Heart right ventricle (tissue), 16 donors: ENCODE measurements at regions of chr20 and their contacts with region 1.

Region 1: GRCh38 chr20:58330687-58331086 is 21.2 kb downstream of the RAB22A start:
- DNase-seq: peak in 1 of 2 donors; percentile 22
- ATAC-seq: peak in 2 of 8 donors; percentile 38 to 47
- H3K4me3 ChIP-seq: no peak overlapping the region
- H3K27ac ChIP-seq: no peak overlapping the region
- H3K4me1 ChIP-seq: peaks cover 0 to 41% (median 22%) of the 10 kb centered on the region in 9 donors
- H3K27me3 ChIP-seq: no peaks in the 10 kb centered on the region
- CTCF ChIP-seq: no peak

Region 2: DNA sequence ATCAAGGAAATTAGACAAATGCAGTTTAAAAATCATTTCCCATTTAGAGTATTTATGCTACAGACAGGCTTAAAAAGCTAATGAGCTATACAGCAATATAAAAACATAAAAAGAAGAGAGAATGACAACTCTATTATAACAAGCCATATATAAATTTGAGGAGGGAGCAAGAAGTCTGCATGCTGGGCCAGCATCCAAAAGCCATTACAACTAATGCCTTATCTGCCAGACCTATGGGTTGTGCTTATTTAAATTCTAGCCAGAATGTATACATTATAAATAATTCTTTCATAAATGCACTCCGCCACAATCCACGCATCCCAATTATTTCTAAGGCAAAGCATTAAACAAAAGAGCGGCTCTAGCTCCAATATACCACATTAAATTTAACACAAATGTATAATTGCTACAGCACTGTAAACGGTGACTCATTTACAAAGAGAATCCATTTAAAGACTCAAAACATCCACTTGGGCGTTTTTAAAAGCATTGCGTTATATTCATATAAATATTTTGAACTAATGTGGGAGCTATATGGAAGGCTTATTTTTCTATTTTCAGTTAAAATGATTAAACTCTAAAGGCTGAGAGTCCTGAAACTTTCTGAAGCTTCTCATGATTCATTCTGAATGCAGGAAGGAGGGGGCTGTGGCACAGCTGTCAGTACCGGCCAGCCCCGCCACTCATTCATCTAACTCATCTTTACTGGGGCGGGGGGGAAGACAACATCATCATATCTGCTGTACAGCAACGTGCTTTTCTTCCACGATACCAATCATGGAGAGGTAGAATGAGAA is 58.9 kb before region 1 on chr20:
- intact Hi-C with region 1: loop called in 1 of 10 experiments (anchors 10 kb)
- DNase-seq: no peak
- ATAC-seq: no peak
- H3K4me3 ChIP-seq: no peak overlapping the region
- H3K27ac ChIP-seq: no peak overlapping the region
- H3K4me1 ChIP-seq: peaks cover 0 to 5% (median 0%) of the 10 kb centered on the region in 9 donors
- H3K27me3 ChIP-seq: no peaks in the 10 kb centered on the region
- CTCF ChIP-seq: no peak

Region 3: DNA sequence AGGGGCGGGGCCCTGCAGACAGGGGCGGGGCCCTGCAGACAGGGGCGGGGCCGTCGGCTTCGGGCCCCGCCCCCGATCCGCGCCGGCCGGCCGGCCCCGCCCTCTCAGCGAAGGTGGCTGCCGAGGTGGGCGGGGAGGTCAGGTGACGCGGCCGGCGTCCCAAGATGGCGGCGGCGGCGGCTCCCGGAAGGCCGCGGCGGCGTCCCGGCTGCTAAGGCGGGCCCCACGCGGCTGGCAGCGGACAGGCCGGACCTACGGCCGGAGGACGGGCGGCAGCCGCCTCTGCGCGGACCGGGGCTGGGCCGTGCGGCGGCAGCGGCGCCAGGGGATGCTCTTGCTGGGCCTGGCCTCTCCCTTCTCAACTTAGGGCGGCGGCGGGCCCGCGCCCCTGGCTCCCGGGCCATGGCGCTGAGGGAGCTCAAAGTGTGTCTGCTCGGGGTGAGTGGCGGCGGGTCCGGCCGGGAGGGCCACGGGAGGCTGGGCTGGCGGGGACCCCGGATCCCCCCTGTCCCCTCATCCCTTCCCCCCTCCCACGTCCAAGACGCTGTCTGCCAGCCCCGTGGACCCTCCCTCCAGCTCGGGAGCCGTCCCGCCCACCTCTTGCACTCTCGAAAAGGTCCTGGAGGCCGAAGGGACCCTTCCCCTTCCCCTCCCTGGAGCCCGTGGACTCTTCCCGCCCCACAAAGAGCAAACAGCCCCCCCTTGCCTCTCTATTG is 21.0 kb before region 1 on chr20 and contains the start of gene RAB22A:
- intact Hi-C with region 1: loop called in 1 of 10 experiments (anchors 2 kb)
- DNase-seq: peak; percentile 77 to 85
- ATAC-seq: peak; percentile 87 to 95 (median 94)
- H3K4me3 ChIP-seq: peak within 1 kb of the TSS; percentile 97 to 100 (median 99)
- H3K27ac ChIP-seq: peak within 1 kb of the TSS; percentile 68 to 96 (median 90)
- H3K4me1 ChIP-seq: peaks cover 0 to 53% (median 18%) of the 10 kb centered on the region in 9 donors
- H3K27me3 ChIP-seq: no peaks in the 10 kb centered on the region
- CTCF ChIP-seq: peak in 1 of 9 donors; percentile 7
- total RNA-seq, gene RAB22A: 5.6 to 8.5 (median 7.1) TPM